ENCODE measurements at regions of chr10 and their contacts with region 1.

Region 1: GRCh38 chr10:60363187-60363586 is 26.5 kb downstream of the ANK3 start:
- DNase-seq: no peak
- H3K4me3 ChIP-seq: no peak overlapping the region
- H3K27ac ChIP-seq: no peak overlapping the region
- H3K4me1 ChIP-seq: no peaks in the 10 kb centered on the region
- H3K27me3 ChIP-seq: no peaks in the 10 kb centered on the region
- CTCF ChIP-seq: no peak

Region 2: DNA sequence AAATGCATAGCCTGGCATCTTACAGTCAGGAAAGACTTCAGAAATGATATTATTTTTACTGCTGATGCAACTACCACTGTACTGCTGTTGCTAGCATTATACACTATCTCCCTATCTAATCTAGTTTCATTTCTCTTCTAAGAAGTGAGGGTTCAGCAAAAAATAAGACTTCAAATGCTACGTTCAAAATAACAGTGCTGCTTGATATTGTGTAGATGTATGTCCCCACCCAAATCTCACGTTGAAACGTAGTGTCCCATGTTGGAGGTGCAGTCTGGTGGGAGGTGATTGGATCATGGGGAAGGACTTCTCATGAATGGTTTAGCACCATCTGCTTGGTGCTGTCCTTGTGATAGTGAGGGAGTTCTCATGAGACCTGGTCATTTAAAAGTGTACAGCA is 102.9 kb before region 1 on chr10:
- CTCF ChIA-PET with region 1: no interaction called
- dilution Hi-C with region 1: loop called (anchors 5 kb)
- in situ Hi-C with region 1: no loop called
- intact Hi-C with region 1: no loop called
- DNase-seq: no peak
- H3K4me3 ChIP-seq: no peak overlapping the region
- H3K27ac ChIP-seq: no peak overlapping the region
- H3K4me1 ChIP-seq: no peaks in the 10 kb centered on the region
- H3K27me3 ChIP-seq: no peaks in the 10 kb centered on the region
- CTCF ChIP-seq: no peak

Measured in mammary epithelial cell (primary cell).